Caco-2 (cell line): ENCODE measurements at regions of chr3 and their contacts with region 1.

Region 1: GRCh38 chr3:85576091-85576690 is 617.4 kb downstream of the CADM2 start:
- DNase-seq: peak; percentile 55 to 61
- H3K4me3 ChIP-seq: no peak overlapping the region
- H3K4me3 Mint-ChIP-seq: no peak overlapping the region
- H3K27ac Mint-ChIP-seq: no peak overlapping the region
- H3K4me1 ChIP-seq: no peaks in the 10 kb centered on the region
- H3K4me1 Mint-ChIP-seq: no peaks in the 10 kb centered on the region
- H3K27me3 ChIP-seq: no peaks in the 10 kb centered on the region
- H3K27me3 Mint-ChIP-seq: no peaks in the 10 kb centered on the region
- CTCF ChIP-seq: peak; percentile 74 to 83

Region 2: DNA sequence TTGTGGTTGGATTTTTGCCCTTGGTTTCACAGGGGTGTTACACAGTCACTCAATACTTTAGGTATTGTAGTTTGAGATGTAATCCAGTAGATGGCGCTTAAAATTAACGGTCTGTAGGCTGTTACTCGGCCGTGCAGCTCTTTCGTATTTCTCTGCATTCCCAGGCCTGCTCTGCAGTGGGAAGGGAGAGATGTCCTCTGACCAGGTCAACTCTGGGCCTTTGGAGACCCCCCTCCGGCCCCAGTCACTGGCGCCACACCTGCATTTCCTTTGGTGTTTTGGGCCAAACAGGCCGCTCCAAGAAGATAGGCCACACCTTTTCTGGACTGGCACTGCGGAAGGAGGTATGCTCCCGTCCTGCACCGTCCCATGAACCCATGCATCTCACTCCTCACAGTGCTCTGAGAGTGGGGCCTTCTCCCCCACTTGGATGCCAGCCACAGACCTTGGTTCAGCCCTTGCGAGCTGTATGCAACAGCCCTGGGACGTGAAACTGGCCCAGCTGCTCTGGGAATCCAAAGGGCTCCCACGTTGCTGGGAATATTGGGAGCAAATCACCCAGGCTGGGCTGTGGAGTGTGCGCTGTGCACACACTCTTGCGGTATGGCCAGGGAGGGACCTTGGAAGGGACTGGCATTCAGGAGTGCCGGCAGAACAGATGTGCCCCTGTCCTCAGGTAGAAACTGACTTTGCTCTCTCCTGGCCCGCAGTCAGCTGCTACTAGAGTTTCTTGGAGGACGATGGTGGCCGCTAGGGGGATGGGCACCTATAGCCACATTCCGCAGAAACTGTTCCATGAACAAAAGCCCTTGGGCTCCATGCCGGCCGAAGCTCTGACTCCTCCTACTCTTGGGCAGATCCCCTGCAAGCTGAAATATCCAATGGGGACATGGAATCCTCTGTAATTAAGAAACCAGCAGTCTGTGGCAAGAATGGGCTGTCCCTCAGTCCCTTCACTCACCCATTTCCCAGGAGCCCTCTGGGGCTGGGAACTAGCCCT is 1027.9 kb before region 1 on chr3:
- CTCF ChIA-PET with region 1: no interaction called
- POLR2A ChIA-PET with region 1: no interaction called
- intact Hi-C with region 1: loop called (anchors 1 kb)
- DNase-seq: peak in 1 of 2 experiments; percentile 17
- H3K4me3 ChIP-seq: no peak overlapping the region
- H3K4me3 Mint-ChIP-seq: no peak overlapping the region
- H3K27ac Mint-ChIP-seq: no peak overlapping the region
- H3K4me1 ChIP-seq: no peaks in the 10 kb centered on the region
- H3K4me1 Mint-ChIP-seq: no peaks in the 10 kb centered on the region
- H3K27me3 ChIP-seq: no peaks in the 10 kb centered on the region
- H3K27me3 Mint-ChIP-seq: no peaks in the 10 kb centered on the region
- CTCF ChIP-seq: peak; percentile 38 to 51

Region 3: GRCh38 chr3:85560088-85560785 is 16.0 kb before region 1 on chr3:
- CTCF ChIA-PET with region 1: no interaction called
- POLR2A ChIA-PET with region 1: no interaction called
- intact Hi-C with region 1: no loop called
- DNase-seq: no peak
- H3K4me3 ChIP-seq: no peak overlapping the region
- H3K4me3 Mint-ChIP-seq: no peak overlapping the region
- H3K27ac Mint-ChIP-seq: no peak overlapping the region
- H3K4me1 ChIP-seq: no peaks in the 10 kb centered on the region
- H3K4me1 Mint-ChIP-seq: no peaks in the 10 kb centered on the region
- H3K27me3 ChIP-seq: no peaks in the 10 kb centered on the region
- H3K27me3 Mint-ChIP-seq: no peaks in the 10 kb centered on the region
- CTCF ChIP-seq: no peak